AG04449 (cell line): ENCODE measurements at regions of chr6 and their contacts with region 1.

Region 1: GRCh38 chr6:15458021-15458459 is 204.8 kb downstream of the DTNBP1 start:
- DNase-seq: no peak
- H3K4me3 ChIP-seq: no peak overlapping the region
- CTCF ChIP-seq: no peak

Region 2: GRCh38 chr6:15441215-15441868 is 16.7 kb before region 1 on chr6:
- CTCF ChIA-PET with region 1: interaction called, 17 read pairs
- POLR2A ChIA-PET with region 1: no interaction called
- DNase-seq: no peak
- H3K4me3 ChIP-seq: no peak overlapping the region
- CTCF ChIP-seq: peak; percentile 71